ENCODE measurements at regions of chr16 and their contacts with region 1.

Region 1: DNA sequence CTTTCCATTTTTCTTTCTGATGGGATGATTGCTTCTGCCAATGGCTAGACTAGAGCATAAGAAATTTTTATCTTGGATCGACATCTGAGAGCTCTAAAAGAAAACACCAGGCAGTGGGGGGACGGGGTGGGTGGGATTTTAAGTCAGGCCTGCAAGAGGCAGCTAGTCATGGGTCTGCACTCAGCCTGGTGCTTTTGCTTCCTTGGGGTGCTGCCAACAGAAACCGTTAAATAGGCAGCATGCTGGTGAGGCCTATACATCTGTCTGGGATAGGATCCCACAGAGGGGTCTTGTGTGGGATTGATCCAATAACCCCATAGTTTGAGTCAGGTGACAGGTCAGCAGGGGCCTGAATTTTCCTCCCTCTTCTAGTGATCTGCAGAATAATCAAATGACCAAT is 26.9 kb downstream of the ZNRF1 start:
- DNase-seq: no peak
- H3K4me3 ChIP-seq: no peak overlapping the region
- H3K27ac ChIP-seq: no peak overlapping the region
- H3K4me1 ChIP-seq: peaks cover 15% of the 10 kb centered on the region
- H3K27me3 ChIP-seq: no peaks in the 10 kb centered on the region
- CTCF ChIP-seq: no peak

Region 2: GRCh38 chr16:74998481-74999218 is 27.1 kb before region 1 on chr16 and contains the start of gene ZNRF1:
- CTCF ChIA-PET with region 1: no interaction called
- dilution Hi-C with region 1: no loop called
- in situ Hi-C with region 1: no loop called
- intact Hi-C with region 1: loop called (anchors 2 kb)
- DNase-seq: peak; percentile 78
- H3K4me3 ChIP-seq: peak within 1 kb of the TSS; percentile 52 to 77 (median 64)
- H3K27ac ChIP-seq: peak within 1 kb of the TSS; percentile 56
- H3K4me1 ChIP-seq: peaks cover 18% of the 10 kb centered on the region
- H3K27me3 ChIP-seq: no peaks in the 10 kb centered on the region
- CTCF ChIP-seq: peak; percentile 47 to 77
- total RNA-seq, gene ZNRF1: 12.8 to 32.0 TPM

Region 3: GRCh38 chr16:75087375-75087979 is 61.7 kb after region 1 on chr16:
- CTCF ChIA-PET with region 1: no interaction called
- dilution Hi-C with region 1: no loop called
- in situ Hi-C with region 1: no loop called
- intact Hi-C with region 1: no loop called
- DNase-seq: peak; percentile 18
- H3K4me3 ChIP-seq: no peak overlapping the region
- H3K27ac ChIP-seq: no peak overlapping the region
- H3K4me1 ChIP-seq: peaks cover 17% of the 10 kb centered on the region
- H3K27me3 ChIP-seq: no peaks in the 10 kb centered on the region
- CTCF ChIP-seq: no peak